ENCODE measurements at regions of chr3 and their contacts with region 1.

Region 1: DNA sequence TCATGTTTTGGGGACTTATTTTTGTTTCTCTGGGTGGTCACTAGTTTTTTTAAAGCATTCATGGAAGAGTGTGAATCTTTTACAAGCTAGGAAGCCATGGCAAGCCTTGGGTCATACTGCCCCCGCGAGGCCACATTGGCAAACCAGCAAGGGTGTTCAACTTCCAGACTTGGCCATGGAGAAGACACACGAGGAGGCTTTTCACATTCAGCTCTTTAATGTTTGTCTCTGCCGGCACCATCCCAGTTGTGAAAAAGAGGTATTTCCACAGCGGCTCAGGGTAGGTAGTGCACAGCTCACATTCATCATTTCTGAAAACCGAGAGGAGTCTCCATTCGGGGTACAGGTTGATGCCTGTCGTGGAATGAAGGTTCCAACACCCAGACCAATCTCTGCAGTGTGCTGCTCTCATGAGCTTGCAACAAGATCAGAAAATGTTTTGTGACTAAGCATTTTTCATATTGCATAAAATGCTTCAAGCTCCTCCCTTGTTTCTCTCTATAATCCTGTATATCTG is 7.7 kb downstream of the CCR5 start:
- DNase-seq: peak; percentile 56
- H3K4me3 ChIP-seq: no peak overlapping the region
- H3K27ac ChIP-seq: no peak overlapping the region
- H3K4me1 ChIP-seq: no peaks in the 10 kb centered on the region
- H3K27me3 ChIP-seq: peaks cover 8 to 13% of the 10 kb centered on the region in 2 experiments
- CTCF ChIP-seq: peak; percentile 76 to 82
- POLR2A ChIP-seq: no peak

Region 2: GRCh38 chr3:46059432-46059831 is 319.1 kb before region 1 on chr3:
- CTCF ChIA-PET with region 1: no interaction called
- POLR2A ChIA-PET with region 1: no interaction called
- dilution Hi-C with region 1: no loop called
- intact Hi-C with region 1: no loop called
- DNase-seq: no peak
- H3K4me3 ChIP-seq: no peak overlapping the region
- H3K27ac ChIP-seq: no peak overlapping the region
- H3K4me1 ChIP-seq: no peaks in the 10 kb centered on the region
- H3K27me3 ChIP-seq: peaks cover 0 to 5% of the 10 kb centered on the region in 2 experiments
- CTCF ChIP-seq: no peak
- POLR2A ChIP-seq: no peak

Region 3: DNA sequence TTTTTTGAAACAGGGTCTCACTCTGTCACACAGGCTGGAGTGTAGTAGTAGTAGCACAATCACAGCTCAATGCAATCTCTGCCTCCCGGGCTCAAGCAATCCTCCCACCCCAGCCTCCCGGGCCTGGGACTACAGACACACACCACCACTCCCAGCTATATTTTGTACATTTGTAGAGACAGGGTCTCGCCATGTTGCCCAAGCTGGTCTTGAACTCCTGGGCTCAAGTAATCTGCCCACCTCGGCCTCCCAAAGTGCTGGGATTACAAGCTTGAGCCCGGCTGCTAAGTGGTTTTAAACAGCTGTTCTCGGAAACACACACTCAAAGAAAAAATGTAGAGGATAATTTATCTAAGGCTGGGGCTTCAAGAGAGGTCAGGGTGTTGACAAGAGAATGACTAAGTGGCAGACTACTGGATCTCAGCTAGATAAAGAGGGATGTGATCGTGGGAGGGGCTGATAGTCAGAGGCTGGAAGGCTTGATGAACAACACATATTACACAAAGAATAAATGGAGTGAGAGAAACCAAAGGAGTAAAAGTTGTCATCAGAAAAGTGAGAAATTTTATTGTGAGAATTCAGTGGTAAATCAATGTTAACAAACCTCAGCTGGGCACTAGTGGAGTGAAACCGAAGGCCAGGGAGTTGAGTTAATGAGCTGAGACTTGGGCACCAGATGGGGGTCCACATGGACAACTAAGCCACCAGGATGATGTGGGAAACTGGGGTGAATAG is 21.7 kb after region 1 on chr3:
- CTCF ChIA-PET with region 1: interaction called, 14 read pairs
- POLR2A ChIA-PET with region 1: no interaction called
- dilution Hi-C with region 1: no loop called
- intact Hi-C with region 1: no loop called
- DNase-seq: peak; percentile 19
- H3K4me3 ChIP-seq: no peak overlapping the region
- H3K27ac ChIP-seq: no peak overlapping the region
- H3K4me1 ChIP-seq: peaks cover 15% of the 10 kb centered on the region
- H3K27me3 ChIP-seq: no peaks in the 10 kb centered on the region
- CTCF ChIP-seq: no peak
- POLR2A ChIP-seq: no peak

Region 4: DNA sequence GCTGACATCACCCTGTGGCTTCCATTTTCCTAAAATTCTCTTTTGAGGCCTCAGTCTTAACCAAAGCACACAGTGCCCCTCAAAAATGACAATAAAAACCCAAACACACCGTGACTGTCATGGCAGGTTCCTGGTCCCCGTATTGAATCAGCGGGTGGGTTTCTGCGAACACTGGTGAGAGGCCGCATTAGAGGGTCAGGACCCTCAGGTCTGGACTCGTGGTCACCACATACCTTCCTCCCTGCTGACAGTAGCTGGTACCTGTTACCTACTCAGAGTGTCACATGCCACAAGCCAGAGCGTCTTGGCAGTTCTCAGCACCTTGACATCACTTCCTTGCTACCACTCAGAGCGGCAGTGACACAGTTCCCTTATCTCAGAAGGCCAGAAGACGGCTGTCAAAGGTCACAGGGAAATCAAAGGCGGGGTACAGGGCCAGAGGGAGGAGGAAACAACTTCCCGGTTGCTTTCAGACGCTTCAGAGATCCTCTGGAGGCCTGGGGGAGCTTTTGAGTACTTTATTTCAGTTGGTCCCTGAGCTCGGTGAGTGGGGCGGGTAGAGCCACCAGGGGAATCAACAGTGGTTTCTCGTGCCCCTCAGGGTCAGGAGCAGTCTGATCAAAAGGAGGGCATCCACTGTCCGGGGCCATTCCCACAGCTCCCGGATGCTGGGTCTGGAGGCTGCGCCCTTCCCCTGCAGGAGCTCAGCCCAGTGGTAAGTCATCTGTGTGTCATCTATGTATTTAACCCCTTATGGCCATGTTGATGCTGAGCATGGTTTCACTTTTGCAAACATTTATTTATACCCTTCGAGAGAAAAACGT is 28.5 kb after region 1 on chr3 and contains the starts of genes CCR5AS and CCRL2:
- CTCF ChIA-PET with region 1: interaction called, 14 read pairs
- POLR2A ChIA-PET with region 1: no interaction called
- dilution Hi-C with region 1: no loop called
- intact Hi-C with region 1: no loop called
- DNase-seq: peak; percentile 86
- H3K4me3 ChIP-seq: peak within 1 kb of the TSS; percentile 19 to 67 (median 23)
- H3K27ac ChIP-seq: peak within 1 kb of the TSS; percentile 63
- H3K4me1 ChIP-seq: peaks cover 41% of the 10 kb centered on the region
- H3K27me3 ChIP-seq: no peaks in the 10 kb centered on the region
- CTCF ChIP-seq: no peak
- POLR2A ChIP-seq: peak; percentile 35
- total RNA-seq, gene CCRL2: 3.9 and 6.4 TPM in 2 replicates

Region 5: GRCh38 chr3:46442576-46443562 is 64.4 kb after region 1 on chr3:
- CTCF ChIA-PET with region 1: interaction called, 13 read pairs
- POLR2A ChIA-PET with region 1: no interaction called
- dilution Hi-C with region 1: no loop called
- intact Hi-C with region 1: no loop called
- DNase-seq: no peak
- H3K4me3 ChIP-seq: no peak overlapping the region
- H3K27ac ChIP-seq: no peak overlapping the region
- H3K4me1 ChIP-seq: no peaks in the 10 kb centered on the region
- H3K27me3 ChIP-seq: no peaks in the 10 kb centered on the region
- CTCF ChIP-seq: peak in 1 of 2 donors; percentile 10
- POLR2A ChIP-seq: no peak

Region 6: DNA sequence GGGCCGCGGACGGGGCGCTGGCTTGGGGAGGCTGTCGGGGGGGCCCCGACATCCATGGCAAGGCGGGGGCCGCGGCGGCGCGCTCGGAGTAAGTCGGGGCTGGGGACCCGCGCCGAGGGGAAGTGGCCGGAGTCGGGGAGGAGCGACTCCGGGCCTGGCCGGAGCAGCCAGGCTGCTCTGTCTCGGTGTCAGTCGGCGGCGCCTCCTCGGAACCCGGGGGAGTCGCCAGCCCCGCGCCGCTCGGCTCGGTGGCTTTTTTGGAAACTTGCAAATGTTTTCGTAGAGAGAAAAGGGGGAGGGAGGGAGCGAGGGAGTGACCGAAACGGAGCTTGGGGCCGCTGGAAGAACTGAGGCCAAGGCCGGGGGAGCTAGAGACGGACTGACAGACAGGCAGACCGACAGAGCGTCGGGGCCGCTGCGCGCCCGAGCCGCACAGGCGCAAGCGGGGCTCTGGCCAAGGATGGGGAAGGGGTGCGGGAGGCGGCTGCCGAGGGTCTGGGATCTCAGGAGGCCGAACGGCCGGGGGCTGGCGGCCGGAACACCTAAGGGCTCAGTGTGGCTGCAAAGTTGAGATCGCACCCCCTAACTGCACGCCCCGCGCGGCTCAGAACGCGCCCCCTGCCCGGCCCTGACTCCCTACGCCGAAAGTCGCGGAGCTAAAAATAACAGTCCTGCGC is 504.0 kb after region 1 on chr3:
- CTCF ChIA-PET with region 1: no interaction called
- POLR2A ChIA-PET with region 1: no interaction called
- dilution Hi-C with region 1: no loop called
- intact Hi-C with region 1: no loop called
- DNase-seq: peak; percentile 26
- H3K4me3 ChIP-seq: peak overlapping the region; percentile 12 to 26 (median 21)
- H3K27ac ChIP-seq: no peak overlapping the region
- H3K4me1 ChIP-seq: no peaks in the 10 kb centered on the region
- H3K27me3 ChIP-seq: peaks cover 32 to 44% of the 10 kb centered on the region in 2 experiments
- CTCF ChIP-seq: no peak
- POLR2A ChIP-seq: no peak

Measured in endothelial cell of umbilical vein (primary cell).